ENCODE measurements at regions of chr6 and their contacts with region 1.

Region 1: GRCh38 chr6:28794175-28795002 is 129.4 kb downstream of the TRIM27 start:
- DNase-seq: no peak

Region 2: DNA sequence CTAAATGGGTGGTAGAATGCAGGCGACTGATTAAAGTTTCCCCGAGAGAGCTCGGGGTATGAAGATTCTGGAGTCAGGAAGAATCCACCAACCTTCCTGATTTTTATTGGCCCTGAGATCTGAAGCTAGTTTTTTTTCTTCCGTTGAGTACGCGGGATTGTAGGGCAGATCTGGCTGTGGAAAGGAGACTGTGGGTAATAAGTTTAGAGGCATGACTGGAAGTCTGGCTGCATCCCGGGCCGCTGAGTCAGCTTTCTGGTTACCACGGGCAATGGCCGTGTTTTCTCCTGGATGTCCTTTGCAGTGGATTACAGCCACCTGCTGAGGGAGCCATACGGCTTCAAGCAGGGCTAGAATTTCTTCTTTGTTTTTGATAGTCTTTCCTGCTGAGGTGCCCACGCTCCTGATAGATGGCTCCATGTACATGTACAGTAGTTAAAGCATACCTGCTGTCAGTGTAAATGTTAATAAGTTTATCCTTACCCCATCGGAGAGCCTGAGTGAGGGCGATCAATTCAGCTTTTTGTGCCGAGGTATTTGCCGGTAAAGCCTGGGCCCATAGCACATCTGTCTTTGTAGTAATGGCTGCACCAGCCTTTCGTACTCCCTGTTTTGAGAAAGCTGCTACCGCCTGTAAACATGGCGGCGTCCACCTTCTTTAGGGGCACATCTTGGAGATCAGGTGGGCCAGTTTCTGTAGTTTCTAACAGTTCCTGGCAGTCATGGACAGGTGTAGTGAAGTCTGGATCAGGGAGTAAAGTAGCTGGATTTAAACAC is 24.6 kb before region 1 on chr6:
- CTCF ChIA-PET with region 1: interaction called, 10 read pairs
- POLR2A ChIA-PET with region 1: interaction called, 6 read pairs
- DNase-seq: no peak

Region 3: GRCh38 chr6:28887796-28888496 is 93.6 kb after region 1 on chr6:
- CTCF ChIA-PET with region 1: no interaction called
- POLR2A ChIA-PET with region 1: no interaction called
- DNase-seq: no peak

Region 4: DNA sequence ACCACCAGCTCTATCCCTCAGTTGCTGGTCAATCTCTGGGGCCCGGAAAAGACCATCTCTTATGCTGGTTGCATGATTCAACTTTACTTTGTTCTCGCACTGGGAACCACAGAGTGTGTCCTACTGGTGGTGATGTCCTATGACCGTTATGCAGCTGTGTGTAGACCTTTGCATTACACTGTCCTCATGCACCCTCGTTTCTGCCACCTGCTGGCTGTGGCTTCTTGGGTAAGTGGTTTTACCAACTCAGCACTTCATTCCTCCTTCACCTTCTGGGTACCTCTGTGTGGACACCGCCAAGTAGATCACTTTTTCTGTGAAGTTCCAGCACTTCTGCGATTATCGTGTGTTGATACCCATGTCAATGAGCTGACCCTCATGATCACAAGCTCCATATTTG is 317.7 kb after region 1 on chr6:
- CTCF ChIA-PET with region 1: no interaction called
- POLR2A ChIA-PET with region 1: no interaction called
- DNase-seq: no peak